ENCODE measurements at regions of chr1 and their contacts with region 1.

Region 1: DNA sequence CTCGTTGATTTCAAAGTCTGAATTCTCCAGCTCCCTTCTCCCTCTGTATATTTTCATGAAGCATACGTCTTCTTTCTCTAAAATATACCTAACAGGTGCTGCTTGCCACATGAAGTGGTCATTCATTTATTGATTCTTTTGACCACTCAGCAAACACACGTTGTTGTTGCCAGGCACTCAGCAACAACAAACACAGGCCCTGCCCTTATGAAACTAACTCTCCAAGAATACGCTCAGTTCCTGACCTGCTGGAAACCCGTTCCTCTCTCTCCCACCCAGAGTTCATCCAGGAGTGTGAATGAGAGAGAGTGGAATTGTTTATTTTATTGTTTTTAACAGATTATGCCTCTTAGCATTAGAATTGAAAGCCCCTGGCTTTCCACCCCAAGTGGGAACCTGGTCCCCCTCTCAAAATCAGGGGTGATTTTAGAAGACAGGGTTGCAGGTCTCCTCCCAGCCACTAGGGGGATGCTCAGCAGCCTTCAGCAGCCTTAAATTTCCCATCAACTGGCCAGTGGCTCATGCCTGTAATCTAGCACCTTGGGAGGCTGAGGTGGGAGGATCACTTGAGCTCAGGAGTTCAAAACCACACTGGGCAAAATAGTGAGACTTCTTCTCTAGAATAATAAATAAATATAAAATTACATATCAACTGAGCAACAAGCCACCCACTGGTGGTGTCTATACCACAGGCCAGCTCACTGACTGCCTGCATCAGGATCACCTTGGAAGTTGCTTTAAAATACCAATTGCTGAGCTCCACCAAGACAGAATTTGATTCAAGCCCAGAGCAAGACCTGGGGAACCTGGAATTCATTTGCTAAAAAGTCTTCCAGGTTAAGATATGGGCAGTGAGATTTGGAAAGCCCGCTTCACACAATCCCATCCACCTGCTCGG is 181.0 kb upstream of the KLHDC7A start:
- DNase-seq: peak; percentile 33 to 40
- H3K4me3 ChIP-seq: no peak overlapping the region
- H3K27ac ChIP-seq: no peak overlapping the region
- H3K4me1 ChIP-seq: no peaks in the 10 kb centered on the region
- H3K27me3 ChIP-seq: peaks cover 0 to 72% (median 9%) of the 10 kb centered on the region in 3 donors
- CTCF ChIP-seq: peak in 5 of 7 experiments; percentile 22 to 74 (median 66)
- EP300 ChIP-seq: no peak
- POLR2A ChIP-seq: no peak

Region 2: GRCh38 chr1:18396247-18396980 is 96.7 kb after region 1 on chr1:
- intact Hi-C with region 1: no loop called
- DNase-seq: no peak
- H3K4me3 ChIP-seq: no peak overlapping the region
- H3K27ac ChIP-seq: no peak overlapping the region
- H3K4me1 ChIP-seq: no peaks in the 10 kb centered on the region
- H3K27me3 ChIP-seq: peaks cover 0 to 44% (median 0%) of the 10 kb centered on the region in 3 donors
- CTCF ChIP-seq: no peak
- EP300 ChIP-seq: no peak
- POLR2A ChIP-seq: no peak

Region 3: GRCh38 chr1:18581420-18581880 is 281.8 kb after region 1 on chr1:
- intact Hi-C with region 1: loop called (anchors 10 kb)
- DNase-seq: peak; percentile 50 to 60
- H3K4me3 ChIP-seq: no peak overlapping the region
- H3K27ac ChIP-seq: no peak overlapping the region
- H3K4me1 ChIP-seq: no peaks in the 10 kb centered on the region
- H3K27me3 ChIP-seq: peaks cover 0 to 44% (median 16%) of the 10 kb centered on the region in 3 donors
- CTCF ChIP-seq: peak in 5 of 7 experiments; percentile 50 to 78 (median 75)
- EP300 ChIP-seq: no peak
- POLR2A ChIP-seq: no peak